Vagina (tissue), 2 donors: ENCODE measurements at regions of chr17 and their contacts with region 1.

Region 1: DNA sequence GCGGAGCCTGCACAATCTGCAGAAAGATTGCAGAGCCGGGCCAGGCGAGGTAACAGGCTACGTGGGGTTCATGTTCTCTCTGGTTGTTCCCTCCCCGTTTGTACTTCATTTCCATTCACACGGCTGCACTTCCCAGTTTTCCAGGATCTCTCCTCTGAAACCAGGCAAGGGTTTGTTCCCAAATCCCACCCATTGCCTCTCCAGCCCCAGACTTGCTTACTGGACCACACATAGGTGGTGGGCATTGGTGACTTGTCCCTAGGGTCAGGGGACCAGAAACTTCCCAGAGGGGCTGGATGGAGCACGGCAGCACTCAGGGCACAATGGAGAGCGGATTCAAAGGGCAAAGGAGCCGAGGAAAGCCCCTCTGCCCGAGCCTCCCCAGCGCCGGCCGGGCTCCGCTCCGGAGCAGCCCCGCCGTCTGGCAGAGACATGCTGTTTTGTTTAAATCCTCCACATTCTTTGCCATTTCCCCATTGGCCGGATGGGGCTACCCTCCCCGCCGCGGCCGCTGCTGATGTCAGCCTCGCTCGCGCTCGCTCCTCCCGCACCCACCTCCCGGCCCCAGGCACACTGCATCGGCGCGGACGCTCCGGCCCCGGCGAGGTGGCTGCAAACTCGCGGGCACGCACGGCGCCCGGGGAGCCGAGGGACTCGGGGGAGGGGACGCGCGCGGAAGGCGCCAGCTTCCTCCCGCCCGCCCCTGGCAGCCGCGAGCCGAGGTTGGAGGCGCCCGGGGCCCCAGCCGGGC is at the start of gene PITPNC1:
- DNase-seq: peak in 1 of 2 donors; percentile 93
- H3K4me3 ChIP-seq: peak within 1 kb of the TSS; percentile 84 to 97
- H3K27ac ChIP-seq: peak within 1 kb of the TSS; percentile 93
- H3K4me1 ChIP-seq: peaks cover 15% of the 10 kb centered on the region
- H3K27me3 ChIP-seq: no peaks in the 10 kb centered on the region
- CTCF ChIP-seq: peak in 1 of 3 experiments; percentile 24
- POLR2A ChIP-seq: peak; percentile 15 to 72
- total RNA-seq, gene PITPNC1: 8.1 TPM

Region 2: DNA sequence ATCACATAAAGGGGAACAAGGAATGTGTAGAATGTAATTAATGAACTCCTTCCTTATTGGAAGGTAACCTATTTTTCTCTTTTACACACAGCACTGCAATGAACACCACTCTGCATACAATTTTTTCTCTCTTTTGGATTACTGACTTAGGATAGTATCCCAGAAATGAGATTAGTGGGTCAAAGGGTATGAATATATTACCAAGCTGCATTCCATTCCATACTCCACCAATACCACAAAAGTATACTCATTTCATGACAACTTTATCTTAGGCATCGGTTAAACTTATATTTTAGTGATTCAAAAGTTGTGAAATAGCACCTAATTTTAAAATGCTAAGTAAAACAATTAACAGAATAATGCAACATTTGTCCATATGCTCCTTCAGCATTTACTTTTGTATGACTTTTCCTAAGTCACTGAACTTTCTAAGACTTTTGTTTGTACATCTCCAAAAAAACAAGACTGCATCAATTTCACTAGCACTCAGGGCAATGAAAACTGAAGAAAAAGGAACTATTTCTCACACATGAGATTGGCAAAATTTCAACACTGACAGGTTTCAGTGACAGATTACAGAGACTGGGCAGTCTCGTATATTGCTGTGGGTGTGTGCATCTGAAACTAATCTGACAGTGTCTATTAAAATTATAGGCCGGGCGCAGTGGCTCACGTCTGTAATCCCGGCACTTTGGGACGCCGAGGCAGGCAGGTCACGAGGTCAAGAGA is 164.1 kb before region 1 on chr17:
- intact Hi-C with region 1: no loop called
- DNase-seq: no peak
- H3K4me3 ChIP-seq: no peak overlapping the region
- H3K27ac ChIP-seq: no peak overlapping the region
- H3K4me1 ChIP-seq: peaks cover 21% of the 10 kb centered on the region
- H3K27me3 ChIP-seq: no peaks in the 10 kb centered on the region
- CTCF ChIP-seq: no peak
- POLR2A ChIP-seq: no peak

Region 3: GRCh38 chr17:67475236-67475937 is 98.5 kb after region 1 on chr17:
- intact Hi-C with region 1: loop called (anchors 10 kb)
- DNase-seq: no peak
- H3K4me3 ChIP-seq: no peak overlapping the region
- H3K27ac ChIP-seq: peak overlapping the region; percentile 54
- H3K4me1 ChIP-seq: peaks cover 25% of the 10 kb centered on the region
- H3K27me3 ChIP-seq: no peaks in the 10 kb centered on the region
- CTCF ChIP-seq: peak; percentile 4 to 80 (median 42)
- POLR2A ChIP-seq: no peak

Region 4: DNA sequence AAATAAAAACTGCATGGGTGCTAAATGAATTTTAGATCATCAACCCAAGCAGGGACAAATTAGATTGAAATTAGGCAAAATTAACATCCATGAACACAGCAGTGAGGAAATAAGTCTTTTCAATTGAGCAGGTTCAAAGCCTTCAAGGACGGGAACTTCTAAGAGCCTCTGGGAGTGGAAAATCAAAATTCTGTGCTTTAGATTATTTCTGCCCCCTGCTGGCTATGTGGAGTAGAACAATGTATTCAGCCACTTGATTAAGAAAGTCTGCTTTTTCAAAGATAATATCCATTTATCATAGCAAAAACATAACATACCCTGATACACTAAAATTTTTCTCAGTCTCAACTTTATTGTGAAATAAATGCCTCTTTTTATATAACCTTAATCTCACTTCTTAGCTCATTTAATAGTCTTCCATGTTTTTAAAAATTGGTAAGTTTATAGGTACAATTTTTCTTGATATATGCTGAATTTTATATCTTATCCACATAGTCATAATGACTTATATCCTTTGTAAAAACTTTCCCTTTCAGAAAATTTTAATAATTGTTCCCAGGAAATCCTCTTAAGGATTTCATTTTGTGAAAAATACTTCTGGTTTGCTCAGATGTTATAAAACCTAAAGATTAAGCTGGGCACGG is 312.7 kb after region 1 on chr17:
- intact Hi-C with region 1: loop called (anchors 2 kb)
- DNase-seq: no peak
- H3K4me3 ChIP-seq: no peak overlapping the region
- H3K27ac ChIP-seq: no peak overlapping the region
- H3K4me1 ChIP-seq: no peaks in the 10 kb centered on the region
- H3K27me3 ChIP-seq: no peaks in the 10 kb centered on the region
- CTCF ChIP-seq: peak; percentile 75 to 82 (median 78)
- POLR2A ChIP-seq: no peak